ENCODE measurements at regions of chr3 and their contacts with region 1.

Region 1: GRCh38 chr3:40985194-40985593 is 214.1 kb upstream of the CTNNB1 start:
- DNase-seq: no peak
- H3K4me3 Mint-ChIP-seq: no peak overlapping the region
- H3K27ac Mint-ChIP-seq: no peak overlapping the region
- H3K4me1 Mint-ChIP-seq: peaks cover 8% of the 10 kb centered on the region
- H3K27me3 Mint-ChIP-seq: peaks cover 37% of the 10 kb centered on the region

Region 2: DNA sequence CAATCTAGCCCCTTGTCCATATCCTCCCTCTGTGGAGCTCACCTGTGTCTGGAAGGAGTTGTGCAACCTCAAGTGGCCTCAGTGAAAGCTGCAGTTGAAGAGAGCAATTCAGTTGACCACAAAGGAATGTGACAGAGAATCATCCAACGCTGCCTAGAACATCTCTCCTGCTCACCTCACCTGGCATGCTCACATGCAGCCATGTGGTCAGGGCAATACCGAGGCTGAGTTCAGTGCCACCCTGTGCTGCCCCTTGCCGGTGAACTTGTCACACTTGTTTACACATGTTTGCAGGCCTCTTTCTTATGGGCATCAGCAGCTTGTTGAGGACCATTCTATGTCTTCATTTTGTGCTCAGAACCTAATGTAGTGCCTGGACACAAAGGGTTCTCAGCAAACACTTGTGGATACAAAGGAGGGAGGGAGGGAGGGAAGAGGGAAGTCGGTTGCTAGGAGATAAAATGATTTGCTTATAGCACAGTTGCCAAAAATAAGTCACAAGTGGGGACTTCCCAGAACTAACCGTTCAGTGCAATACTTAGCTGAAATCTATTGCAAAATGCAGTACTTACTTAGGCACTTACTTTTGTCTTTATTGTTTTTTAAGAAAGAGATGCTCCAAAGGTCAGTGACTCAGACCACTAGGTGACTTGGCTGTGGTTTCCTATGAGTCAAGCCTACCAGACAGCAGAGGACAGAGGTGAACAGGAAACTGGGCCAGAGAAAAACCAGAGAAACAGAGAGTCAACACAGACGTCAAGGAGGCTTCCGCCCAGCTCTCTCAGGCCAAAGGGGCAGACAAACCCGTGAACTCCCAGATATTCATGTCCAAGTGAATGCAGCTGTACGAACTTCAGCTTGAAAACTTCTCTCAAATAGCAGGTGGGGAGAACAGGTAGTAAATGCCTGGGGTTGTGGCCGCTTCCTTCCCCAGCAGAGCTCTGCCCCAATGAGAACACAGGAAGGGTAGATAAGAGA is 13.7 kb before region 1 on chr3:
- CTCF ChIA-PET with region 1: no interaction called
- intact Hi-C with region 1: loop called (anchors 1 kb)
- DNase-seq: peak; percentile 48
- H3K4me3 Mint-ChIP-seq: no peak overlapping the region
- H3K27ac Mint-ChIP-seq: peak overlapping the region; percentile 10
- H3K4me1 Mint-ChIP-seq: peaks cover 13% of the 10 kb centered on the region
- H3K27me3 Mint-ChIP-seq: peaks cover 26% of the 10 kb centered on the region

Region 3: DNA sequence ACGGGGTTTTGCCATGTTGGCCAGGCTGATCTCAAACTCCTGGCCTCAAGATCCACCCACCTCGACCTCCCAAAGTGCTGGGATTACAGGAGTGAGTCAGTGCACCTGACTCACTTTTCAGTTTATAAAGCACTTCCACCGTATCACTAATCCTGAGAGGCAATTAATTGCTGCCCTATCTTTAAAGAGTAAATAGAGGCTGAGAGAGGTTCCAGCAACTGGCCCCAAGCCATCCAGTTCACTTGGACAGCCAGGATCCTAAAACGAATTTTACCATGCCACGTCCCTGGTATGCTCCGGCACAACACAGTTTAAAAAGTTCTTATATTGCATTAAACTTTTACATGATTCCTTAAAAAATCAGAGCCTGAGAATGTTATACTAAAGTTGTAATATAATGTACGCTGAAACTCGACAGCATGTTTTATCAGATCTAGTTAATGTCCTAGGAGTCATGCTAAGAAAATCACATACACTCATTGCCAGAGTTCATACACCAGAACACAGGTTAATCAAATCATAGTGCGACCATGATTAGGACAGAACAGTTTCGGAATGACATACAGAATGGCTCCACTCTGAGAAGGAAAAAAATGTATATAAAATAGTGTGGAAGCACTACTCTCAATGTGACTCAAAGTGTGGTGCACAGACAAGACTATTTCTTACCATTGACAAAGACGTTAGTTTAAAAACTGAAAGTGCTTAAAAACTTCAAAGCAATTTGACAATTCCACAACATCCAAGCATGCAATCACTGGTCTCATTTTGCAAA is 851.4 kb after region 1 on chr3:
- CTCF ChIA-PET with region 1: no interaction called
- intact Hi-C with region 1: loop called (anchors 1 kb)
- DNase-seq: peak; percentile 9
- H3K4me3 Mint-ChIP-seq: no peak overlapping the region
- H3K27ac Mint-ChIP-seq: no peak overlapping the region
- H3K4me1 Mint-ChIP-seq: peaks cover 16% of the 10 kb centered on the region
- H3K27me3 Mint-ChIP-seq: no peaks in the 10 kb centered on the region

Region 4: GRCh38 chr3:42090973-42091731 is 1106.0 kb after region 1 on chr3 and contains the start of gene TRAK1:
- CTCF ChIA-PET with region 1: no interaction called
- intact Hi-C with region 1: loop called (anchors 10 kb)
- DNase-seq: no peak
- H3K4me3 Mint-ChIP-seq: no peak within 1 kb of the TSS
- H3K27ac Mint-ChIP-seq: no peak within 1 kb of the TSS
- H3K4me1 Mint-ChIP-seq: peaks cover 51% of the 10 kb centered on the region
- H3K27me3 Mint-ChIP-seq: no peaks in the 10 kb centered on the region
- total RNA-seq, gene TRAK1: 18.3 to 19.1 TPM